Right lobe of liver (tissue), 6 donors: ENCODE measurements at regions of chr4 and their contacts with region 1.

Region 1: DNA sequence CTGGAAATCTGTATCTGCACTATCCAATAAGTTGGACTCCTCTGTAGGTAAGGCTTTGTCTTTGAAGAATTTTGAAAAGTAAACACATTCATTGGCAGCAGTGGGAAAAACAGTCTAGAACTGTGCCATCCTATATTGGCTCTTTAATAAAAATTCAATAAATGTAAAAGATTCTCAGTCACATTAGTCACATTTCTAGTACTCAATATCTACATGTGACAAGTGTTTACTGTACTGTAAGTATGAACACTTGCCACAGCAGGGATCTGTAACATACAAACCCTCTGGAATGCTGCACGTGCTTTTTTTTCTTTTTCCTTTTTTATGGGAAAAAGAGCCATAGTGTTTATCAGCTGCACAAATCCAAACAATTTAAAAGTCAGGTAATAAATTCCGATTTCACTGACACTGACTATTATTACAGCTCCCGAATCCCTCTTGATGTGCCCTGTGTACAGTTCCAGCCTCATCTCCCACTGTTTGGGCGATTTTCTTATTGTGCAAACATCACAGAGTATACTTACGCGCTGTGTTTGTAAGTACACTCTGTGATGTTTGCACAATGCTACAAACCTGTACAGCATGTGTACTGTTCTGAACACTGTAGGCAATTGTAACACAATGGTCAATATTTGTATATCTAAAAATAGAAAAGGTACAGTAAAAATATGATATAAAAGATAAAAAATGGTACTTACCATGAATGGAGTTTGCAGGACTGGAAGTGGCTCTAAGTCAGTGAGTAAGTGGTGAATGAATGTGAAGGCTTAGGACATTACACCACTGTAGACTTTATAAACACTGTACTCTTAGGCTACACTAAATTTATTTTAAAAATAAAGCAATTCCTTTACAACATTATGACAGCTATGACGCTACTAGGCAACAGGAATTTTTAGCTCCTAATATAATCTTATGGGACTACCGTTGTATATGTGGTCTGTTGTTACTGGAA is 8.7 kb downstream of the PYURF start:
- DNase-seq: no peak
- ATAC-seq: peak; percentile 81 to 92 (median 87)
- H3K4me3 ChIP-seq: no peak overlapping the region
- H3K27ac ChIP-seq: no peak overlapping the region
- H3K4me1 ChIP-seq: peaks cover 0 to 12% (median 0%) of the 10 kb centered on the region in 4 donors
- H3K27me3 ChIP-seq: no peaks in the 10 kb centered on the region
- CTCF ChIP-seq: no peak
- POLR2A ChIP-seq: no peak

Region 2: GRCh38 chr4:88225232-88226105 is 289.4 kb before region 1 on chr4:
- intact Hi-C with region 1: loop called (anchors 5 to 10 kb)
- DNase-seq: no peak
- ATAC-seq: peak; percentile 24 to 66 (median 48)
- H3K4me3 ChIP-seq: no peak overlapping the region
- H3K27ac ChIP-seq: no peak overlapping the region
- H3K4me1 ChIP-seq: no peaks in the 10 kb centered on the region
- H3K27me3 ChIP-seq: no peaks in the 10 kb centered on the region
- CTCF ChIP-seq: no peak
- POLR2A ChIP-seq: no peak

Region 3: GRCh38 chr4:88366460-88366859 is 148.4 kb before region 1 on chr4:
- intact Hi-C with region 1: loop called (anchors 10 kb)
- DNase-seq: no peak
- ATAC-seq: no peak
- H3K4me3 ChIP-seq: no peak overlapping the region
- H3K27ac ChIP-seq: no peak overlapping the region
- H3K4me1 ChIP-seq: no peaks in the 10 kb centered on the region
- H3K27me3 ChIP-seq: no peaks in the 10 kb centered on the region
- CTCF ChIP-seq: no peak
- POLR2A ChIP-seq: no peak

Region 4: DNA sequence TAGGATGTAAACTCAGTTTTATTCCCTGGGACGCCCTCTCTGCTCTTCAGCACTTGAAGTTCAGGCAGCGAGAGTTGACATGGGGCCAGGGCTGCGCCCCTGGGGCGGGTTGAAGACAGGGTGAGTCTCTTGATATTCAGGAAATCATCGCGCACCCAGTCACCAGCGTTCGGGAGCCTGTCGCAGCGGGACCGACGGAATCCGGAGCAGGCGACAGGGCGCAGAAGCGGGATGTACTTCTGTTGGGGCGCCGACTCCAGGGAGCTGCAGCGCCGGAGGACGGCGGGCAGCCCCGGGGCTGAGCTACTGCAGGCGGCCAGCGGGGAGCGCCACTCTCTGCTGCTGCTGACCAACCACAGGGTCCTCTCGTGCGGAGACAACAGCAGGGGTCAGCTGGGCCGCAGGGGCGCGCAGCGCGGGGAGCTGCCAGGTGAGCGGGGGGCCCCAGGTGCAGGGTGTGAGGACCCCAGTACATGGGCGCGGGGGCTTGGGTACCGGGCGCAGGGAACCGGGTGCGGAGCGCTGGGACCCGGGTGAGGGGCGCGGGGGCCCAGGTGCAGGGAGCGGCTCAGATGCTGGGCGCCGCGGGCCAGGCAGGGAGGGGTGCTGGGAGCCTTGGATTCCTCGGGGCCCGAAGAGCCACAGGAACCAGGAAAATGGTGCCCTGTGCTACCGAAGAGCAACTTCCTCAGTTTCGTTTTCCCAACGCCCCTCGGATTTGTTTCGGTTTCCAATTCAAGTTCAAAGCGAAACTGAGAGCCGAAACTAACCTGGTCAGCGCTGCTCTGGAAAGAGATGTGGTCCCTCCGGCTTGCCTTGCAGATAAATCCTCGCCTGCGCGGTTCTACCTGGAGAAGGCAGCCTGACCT is 135.9 kb before region 1 on chr4 and contains the start of gene HERC6:
- intact Hi-C with region 1: loop called in 1 of 2 experiments (anchors 10 kb)
- DNase-seq: peak; percentile 79 to 85 (median 82)
- ATAC-seq: peak; percentile 93 to 97 (median 96)
- H3K4me3 ChIP-seq: peak within 1 kb of the TSS; percentile 79 to 99 (median 93)
- H3K27ac ChIP-seq: peak within 1 kb of the TSS; percentile 92 to 100 (median 99)
- H3K4me1 ChIP-seq: peaks cover 0 to 3% (median 0%) of the 10 kb centered on the region in 4 donors
- H3K27me3 ChIP-seq: no peaks in the 10 kb centered on the region
- CTCF ChIP-seq: peak; percentile 60 to 87 (median 68)
- POLR2A ChIP-seq: peak; percentile 13
- total RNA-seq, gene HERC6: 1.7 to 4.2 (median 3.6) TPM